ENCODE measurements at regions of chr5 and their contacts with region 1.

Region 1: DNA sequence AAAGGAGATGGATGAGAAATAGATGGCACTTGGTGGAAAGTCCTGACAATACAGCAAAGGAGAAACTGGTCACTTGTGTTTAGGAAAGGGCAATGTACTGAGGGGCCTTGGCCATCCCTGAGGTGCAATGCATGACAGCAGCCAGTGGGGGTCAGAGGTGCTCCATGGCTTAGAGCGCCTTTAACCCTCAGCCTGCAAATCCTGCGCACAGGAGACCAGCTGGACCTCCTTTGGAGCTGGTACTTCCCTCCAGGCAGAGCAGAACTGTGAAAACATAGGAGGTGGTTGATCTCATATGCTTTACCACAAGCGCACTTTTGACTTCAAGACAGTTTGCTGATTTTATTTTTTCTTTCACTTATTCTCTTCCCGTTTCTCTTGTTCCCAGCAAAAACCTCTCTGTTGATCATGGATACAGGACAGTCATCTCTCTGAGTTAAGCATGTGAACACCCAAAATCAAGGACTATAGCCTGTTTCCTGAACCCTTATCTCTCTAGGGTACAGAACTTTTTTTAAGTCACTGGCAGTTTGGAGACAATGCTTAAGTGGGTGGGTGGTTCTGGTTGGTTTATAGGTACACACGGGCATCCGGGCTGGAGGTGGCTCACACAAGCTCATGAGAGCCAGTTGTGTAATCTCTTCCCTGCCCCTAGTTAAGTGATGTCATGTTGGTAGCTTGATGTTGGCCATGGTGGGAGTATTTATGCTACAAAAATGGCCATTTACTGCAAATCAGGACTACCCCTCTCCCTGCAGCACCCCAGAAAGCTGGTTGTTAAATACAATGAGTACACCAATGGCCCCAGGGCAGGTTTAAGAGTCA is 37.6 kb upstream of the ANKRD55 start:
- DNase-seq: peak; percentile 71
- CTCF ChIP-seq: peak; percentile 99

Region 2: DNA sequence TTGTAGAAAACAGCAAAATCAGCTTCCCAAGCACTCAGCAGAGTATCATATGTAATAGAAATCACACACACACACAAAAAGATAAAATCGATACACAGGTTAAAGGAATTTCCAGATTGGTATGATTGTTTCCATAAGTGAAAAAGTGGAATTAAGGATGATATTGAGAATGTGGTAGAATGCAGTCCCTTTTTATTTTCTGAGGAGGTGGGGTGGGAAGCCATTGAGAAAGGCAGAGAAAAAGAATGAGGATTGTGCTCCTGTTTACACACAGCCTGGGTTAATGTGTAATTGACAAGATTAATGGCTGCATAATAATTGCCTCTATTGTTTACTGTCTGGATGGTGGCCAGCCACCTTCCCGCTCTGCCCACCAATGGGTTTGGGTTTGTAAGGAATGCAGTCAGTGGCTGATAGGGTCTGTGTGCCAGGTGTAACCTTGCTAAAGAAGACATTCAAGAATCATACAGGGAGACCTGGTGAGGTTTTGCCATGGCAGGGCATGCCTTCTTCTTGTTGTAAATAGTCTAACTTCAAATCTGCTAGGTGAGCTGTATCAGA is 367.4 kb after region 1 on chr5:
- in situ Hi-C with region 1: no loop called
- DNase-seq: no peak
- CTCF ChIP-seq: no peak

Region 3: DNA sequence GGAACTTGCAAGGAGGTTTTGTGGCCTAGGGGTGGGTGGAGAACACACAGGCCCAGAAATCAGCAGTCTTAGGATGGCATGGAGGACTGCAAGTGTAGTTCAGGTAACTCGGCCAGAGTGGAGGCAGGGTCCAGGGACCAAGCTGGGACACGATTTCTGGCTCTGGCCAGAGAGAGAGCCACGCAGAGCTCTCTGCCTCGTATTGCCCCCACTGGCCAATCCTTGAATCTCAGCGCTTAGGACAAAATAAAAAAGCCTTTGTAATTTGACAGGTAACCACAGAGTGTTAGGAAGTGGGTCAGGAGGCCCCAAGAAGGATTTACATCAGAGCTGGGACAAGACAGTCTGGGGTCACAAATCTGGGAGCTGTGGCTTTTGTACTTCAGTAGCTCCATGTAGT is 556.3 kb after region 1 on chr5:
- in situ Hi-C with region 1: loop called (anchors 10 kb)
- DNase-seq: no peak
- CTCF ChIP-seq: no peak

Region 4: GRCh38 chr5:57128325-57128724 is 857.5 kb after region 1 on chr5:
- in situ Hi-C with region 1: loop called (anchors 25 kb)
- DNase-seq: no peak
- CTCF ChIP-seq: no peak